Sigmoid colon (tissue), 7 donors: ENCODE measurements at regions of chr5 and their contacts with region 1.

Region 1: DNA sequence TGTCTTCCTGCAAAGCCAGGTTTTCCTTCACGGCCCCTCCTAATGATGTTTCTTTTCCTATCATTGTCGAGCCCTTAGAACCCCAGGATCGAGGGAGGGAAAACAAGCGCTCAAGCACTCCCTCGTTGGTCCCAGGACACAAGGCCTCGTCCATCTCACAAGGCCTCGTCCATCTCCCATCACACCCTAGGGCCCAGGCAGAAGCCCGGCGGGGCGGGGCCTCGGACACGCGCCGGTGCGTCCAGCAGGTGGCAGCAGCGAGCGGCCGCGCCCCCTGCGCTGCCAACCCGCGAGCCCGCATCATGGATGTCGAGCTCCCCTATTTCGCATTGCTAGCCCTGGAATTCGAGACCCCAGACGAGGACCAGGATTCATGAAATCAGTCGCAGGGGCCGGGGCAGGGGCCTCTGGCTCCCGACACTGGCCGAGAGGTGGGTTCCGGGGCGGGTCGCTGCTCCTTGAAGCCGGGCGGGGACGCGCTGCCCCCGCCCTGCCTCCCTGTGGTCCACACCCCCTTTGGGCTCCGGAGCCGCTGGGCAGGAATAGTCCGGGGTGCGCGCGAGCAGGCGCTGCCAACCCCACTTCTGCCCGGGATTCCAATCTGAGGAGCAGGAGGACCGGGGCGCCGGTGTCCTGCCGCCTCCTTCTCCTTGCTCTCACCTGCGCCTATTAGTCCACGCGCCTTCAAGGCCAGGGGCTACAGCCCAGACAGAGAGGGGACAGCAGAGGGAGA is at the start of gene ABLIM3:
- DNase-seq: peak; percentile 79
- H3K4me3 ChIP-seq: peak within 1 kb of the TSS; percentile 58 to 74 (median 62)
- H3K27ac ChIP-seq: peak within 1 kb of the TSS; percentile 57 to 83 (median 62)
- H3K4me1 ChIP-seq: peaks cover 0 to 35% (median 27%) of the 10 kb centered on the region in 4 donors
- H3K27me3 ChIP-seq: no peaks in the 10 kb centered on the region
- CTCF ChIP-seq: peak; percentile 58 to 96 (median 68)
- EP300 ChIP-seq: no peak
- POLR2A ChIP-seq: no peak
- total RNA-seq, gene ABLIM3: 6.8 to 19.9 (median 13.8) TPM

Region 2: GRCh38 chr5:148853868-148854267 is 287.5 kb before region 1 on chr5:
- intact Hi-C with region 1: no loop called
- DNase-seq: no peak
- H3K4me3 ChIP-seq: no peak overlapping the region
- H3K27ac ChIP-seq: no peak overlapping the region
- H3K4me1 ChIP-seq: no peaks in the 10 kb centered on the region
- H3K27me3 ChIP-seq: no peaks in the 10 kb centered on the region
- CTCF ChIP-seq: no peak
- EP300 ChIP-seq: no peak
- POLR2A ChIP-seq: no peak

Region 3: DNA sequence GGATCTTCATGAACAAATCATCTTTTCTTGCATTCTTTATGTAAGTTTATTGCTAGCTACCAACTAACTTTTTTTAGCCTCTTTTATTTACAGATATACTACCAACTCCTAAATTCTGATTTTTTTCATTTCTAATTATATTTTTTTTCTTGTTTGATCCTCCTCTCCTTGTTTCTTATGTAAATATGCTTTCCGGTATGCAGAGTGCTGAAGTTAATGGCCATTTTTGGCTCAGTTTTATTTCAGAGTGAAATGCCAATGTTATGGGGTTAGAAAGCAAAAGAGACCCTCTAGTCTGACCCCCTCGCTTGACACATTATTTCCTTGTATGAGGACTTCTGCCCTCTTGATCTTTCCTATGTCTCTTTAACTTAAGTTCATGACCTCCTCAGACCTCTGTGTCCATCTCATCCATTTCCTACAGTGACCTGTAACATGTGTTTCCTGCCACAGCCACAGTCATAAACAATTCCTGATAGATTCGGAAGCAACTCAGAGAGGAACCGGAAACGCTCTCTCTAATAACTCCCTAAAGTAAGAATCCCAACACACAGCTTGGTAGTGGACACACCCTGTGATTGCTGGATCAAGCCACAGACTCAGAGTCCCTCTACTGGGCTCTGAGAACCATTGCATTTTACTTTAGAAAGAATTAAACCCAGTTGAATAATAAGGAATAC is 87.4 kb after region 1 on chr5:
- intact Hi-C with region 1: loop called (anchors 2 kb)
- DNase-seq: peak; percentile 67
- H3K4me3 ChIP-seq: no peak overlapping the region
- H3K27ac ChIP-seq: peak overlapping the region in 3 of 4 donors; percentile 27 to 45 (median 30)
- H3K4me1 ChIP-seq: peaks cover 0 to 16% (median 12%) of the 10 kb centered on the region in 4 donors
- H3K27me3 ChIP-seq: no peaks in the 10 kb centered on the region
- CTCF ChIP-seq: peak; percentile 38 to 58 (median 48)
- EP300 ChIP-seq: no peak
- POLR2A ChIP-seq: no peak

Region 4: DNA sequence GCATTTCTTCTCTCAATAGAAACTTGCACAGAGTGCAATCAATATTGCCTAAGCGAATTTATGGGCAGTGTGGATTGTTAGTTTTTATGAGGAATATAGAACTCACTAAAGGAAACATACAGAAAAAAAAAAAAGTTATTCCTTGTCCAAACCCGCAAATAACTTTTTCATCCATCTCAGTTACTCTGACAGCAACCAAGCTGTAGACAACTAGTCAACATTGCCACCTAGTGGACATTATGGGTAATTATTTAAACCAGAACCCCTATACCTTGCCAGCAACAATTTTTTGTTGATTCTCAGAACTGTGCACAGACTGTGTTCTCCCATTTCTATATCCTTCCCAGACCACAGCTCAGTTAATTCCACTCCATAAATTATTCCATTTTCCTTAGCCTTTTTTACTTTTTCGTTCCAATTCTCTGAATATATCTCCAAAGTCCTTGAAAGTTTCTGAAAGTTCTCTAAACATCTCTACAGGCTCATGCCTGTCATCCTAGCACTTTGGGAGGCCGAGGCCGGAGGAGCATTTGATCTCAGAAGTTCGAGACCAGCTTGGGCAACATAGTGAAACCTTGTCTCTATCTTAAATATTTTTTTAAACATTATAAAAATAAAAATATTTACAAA is 127.7 kb after region 1 on chr5:
- intact Hi-C with region 1: loop called (anchors 1 kb)
- DNase-seq: no peak
- H3K4me3 ChIP-seq: no peak overlapping the region
- H3K27ac ChIP-seq: no peak overlapping the region
- H3K4me1 ChIP-seq: peaks cover 0 to 16% (median 12%) of the 10 kb centered on the region in 4 donors
- H3K27me3 ChIP-seq: no peaks in the 10 kb centered on the region
- CTCF ChIP-seq: peak in 3 of 4 experiments; percentile 51 to 69 (median 58)
- EP300 ChIP-seq: no peak
- POLR2A ChIP-seq: no peak

Region 5: GRCh38 chr5:149561848-149562247 is 420.5 kb after region 1 on chr5:
- intact Hi-C with region 1: loop called (anchors 10 kb)
- DNase-seq: no peak
- H3K4me3 ChIP-seq: peak overlapping the region in 1 of 4 donors; percentile 10
- H3K27ac ChIP-seq: peak overlapping the region; percentile 78 to 91 (median 84)
- H3K4me1 ChIP-seq: peaks cover 0 to 43% (median 38%) of the 10 kb centered on the region in 4 donors
- H3K27me3 ChIP-seq: no peaks in the 10 kb centered on the region
- CTCF ChIP-seq: no peak
- EP300 ChIP-seq: peak in 2 of 4 donors; percentile 27 to 59
- POLR2A ChIP-seq: no peak